ENCODE measurements at regions of chr1 and their contacts with region 1.

Region 1: GRCh38 chr1:204746838-204747442 is 61.4 kb upstream of the LRRN2 start:
- DNase-seq: peak; percentile 34
- H3K4me3 Mint-ChIP-seq: no peak overlapping the region
- H3K27ac Mint-ChIP-seq: no peak overlapping the region
- H3K4me1 Mint-ChIP-seq: no peaks in the 10 kb centered on the region
- H3K27me3 Mint-ChIP-seq: peaks cover 18% of the 10 kb centered on the region

Region 2: GRCh38 chr1:203744075-203744972 is 1002.6 kb before region 1 on chr1:
- intact Hi-C with region 1: no loop called
- DNase-seq: peak; percentile 32
- H3K4me3 Mint-ChIP-seq: peak overlapping the region; percentile 32
- H3K27ac Mint-ChIP-seq: peak overlapping the region; percentile 92
- H3K4me1 Mint-ChIP-seq: peaks cover 25% of the 10 kb centered on the region
- H3K27me3 Mint-ChIP-seq: no peaks in the 10 kb centered on the region

Region 3: GRCh38 chr1:204685236-204686006 is 61.5 kb before region 1 on chr1 and contains the start of gene LRRN2:
- intact Hi-C with region 1: no loop called
- DNase-seq: no peak
- H3K4me3 Mint-ChIP-seq: peak within 1 kb of the TSS; percentile 68
- H3K27ac Mint-ChIP-seq: no peak within 1 kb of the TSS
- H3K4me1 Mint-ChIP-seq: no peaks in the 10 kb centered on the region
- H3K27me3 Mint-ChIP-seq: peaks cover 45% of the 10 kb centered on the region
- total RNA-seq, gene LRRN2: not detected in 2 replicates

Region 4: GRCh38 chr1:204763706-204764427 is 16.9 kb after region 1 on chr1:
- intact Hi-C with region 1: loop called (anchors 1 kb)
- DNase-seq: peak; percentile 64
- H3K4me3 Mint-ChIP-seq: peak overlapping the region; percentile 20
- H3K27ac Mint-ChIP-seq: no peak overlapping the region
- H3K4me1 Mint-ChIP-seq: peaks cover 11% of the 10 kb centered on the region
- H3K27me3 Mint-ChIP-seq: peaks cover 40% of the 10 kb centered on the region

Region 5: GRCh38 chr1:204791453-204792353 is 44.8 kb after region 1 on chr1:
- intact Hi-C with region 1: loop called (anchors 5 kb)
- DNase-seq: peak; percentile 66
- H3K4me3 Mint-ChIP-seq: no peak overlapping the region
- H3K27ac Mint-ChIP-seq: no peak overlapping the region
- H3K4me1 Mint-ChIP-seq: no peaks in the 10 kb centered on the region
- H3K27me3 Mint-ChIP-seq: peaks cover 30% of the 10 kb centered on the region